ENCODE measurements at regions of chr6 and their contacts with region 1.

Region 1: GRCh38 chr6:37791156-37791919 is 28.2 kb upstream of the ZFAND3 start:
- DNase-seq: peak; percentile 66
- H3K4me3 Mint-ChIP-seq: no peak overlapping the region
- H3K27ac Mint-ChIP-seq: no peak overlapping the region
- H3K4me1 Mint-ChIP-seq: peaks cover 12% of the 10 kb centered on the region
- H3K27me3 Mint-ChIP-seq: peaks cover 1% of the 10 kb centered on the region

Region 2: DNA sequence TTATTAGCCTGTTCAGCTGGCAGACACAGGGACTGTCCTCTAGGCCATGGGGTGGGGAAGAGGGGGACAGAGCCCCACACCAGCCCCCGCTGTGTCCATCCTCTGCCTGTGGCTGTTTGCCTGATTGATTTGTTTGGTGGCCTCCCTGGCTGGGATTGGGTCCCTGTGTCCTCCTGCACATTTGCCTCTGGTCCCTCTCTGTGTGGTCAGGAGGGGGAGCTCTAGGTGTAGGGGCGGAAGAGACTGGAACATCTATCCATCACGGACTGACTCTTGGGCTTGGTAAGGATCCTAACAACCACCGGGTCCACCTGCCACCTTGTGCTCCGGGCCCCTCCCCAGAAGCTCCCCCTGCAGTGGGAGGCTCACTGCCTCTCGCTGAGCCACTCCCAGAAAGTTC is 253.2 kb before region 1 on chr6:
- intact Hi-C with region 1: no loop called
- DNase-seq: no peak
- H3K4me3 Mint-ChIP-seq: no peak overlapping the region
- H3K27ac Mint-ChIP-seq: no peak overlapping the region
- H3K4me1 Mint-ChIP-seq: no peaks in the 10 kb centered on the region
- H3K27me3 Mint-ChIP-seq: peaks cover 45% of the 10 kb centered on the region

Region 3: GRCh38 chr6:37624986-37625574 is 166.3 kb before region 1 on chr6:
- intact Hi-C with region 1: no loop called
- DNase-seq: no peak
- H3K4me3 Mint-ChIP-seq: no peak overlapping the region
- H3K27ac Mint-ChIP-seq: no peak overlapping the region
- H3K4me1 Mint-ChIP-seq: peaks cover 18% of the 10 kb centered on the region
- H3K27me3 Mint-ChIP-seq: peaks cover 21% of the 10 kb centered on the region

Region 4: GRCh38 chr6:37698261-37699137 is 92.8 kb before region 1 on chr6:
- intact Hi-C with region 1: loop called (anchors 1 kb)
- DNase-seq: peak; percentile 58
- H3K4me3 Mint-ChIP-seq: peak overlapping the region; percentile 91
- H3K27ac Mint-ChIP-seq: peak overlapping the region; percentile 91
- H3K4me1 Mint-ChIP-seq: peaks cover 28% of the 10 kb centered on the region
- H3K27me3 Mint-ChIP-seq: peaks cover 34% of the 10 kb centered on the region

Region 5: DNA sequence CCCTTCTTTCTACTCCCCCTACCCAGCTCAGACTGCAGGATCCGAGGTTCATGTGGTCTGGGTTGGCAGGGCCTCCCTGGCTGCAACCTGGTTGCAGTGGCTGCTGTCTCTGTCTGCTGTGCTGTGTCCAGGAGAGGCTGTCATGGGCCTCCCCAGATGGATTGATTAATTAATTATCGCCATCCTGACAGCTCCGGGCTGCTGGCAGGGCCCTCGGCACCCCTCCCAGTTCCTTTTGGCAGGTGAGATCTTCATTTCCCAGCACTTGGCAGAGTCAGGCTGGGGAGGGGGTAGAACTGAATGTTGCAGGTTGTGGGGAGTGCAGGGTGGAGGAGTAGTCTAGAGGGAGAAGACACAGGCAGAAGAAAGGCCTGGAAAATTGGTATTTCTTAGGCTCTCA is 28.5 kb before region 1 on chr6:
- intact Hi-C with region 1: no loop called
- DNase-seq: no peak
- H3K4me3 Mint-ChIP-seq: no peak overlapping the region
- H3K27ac Mint-ChIP-seq: no peak overlapping the region
- H3K4me1 Mint-ChIP-seq: peaks cover 10% of the 10 kb centered on the region
- H3K27me3 Mint-ChIP-seq: no peaks in the 10 kb centered on the region

Region 6: DNA sequence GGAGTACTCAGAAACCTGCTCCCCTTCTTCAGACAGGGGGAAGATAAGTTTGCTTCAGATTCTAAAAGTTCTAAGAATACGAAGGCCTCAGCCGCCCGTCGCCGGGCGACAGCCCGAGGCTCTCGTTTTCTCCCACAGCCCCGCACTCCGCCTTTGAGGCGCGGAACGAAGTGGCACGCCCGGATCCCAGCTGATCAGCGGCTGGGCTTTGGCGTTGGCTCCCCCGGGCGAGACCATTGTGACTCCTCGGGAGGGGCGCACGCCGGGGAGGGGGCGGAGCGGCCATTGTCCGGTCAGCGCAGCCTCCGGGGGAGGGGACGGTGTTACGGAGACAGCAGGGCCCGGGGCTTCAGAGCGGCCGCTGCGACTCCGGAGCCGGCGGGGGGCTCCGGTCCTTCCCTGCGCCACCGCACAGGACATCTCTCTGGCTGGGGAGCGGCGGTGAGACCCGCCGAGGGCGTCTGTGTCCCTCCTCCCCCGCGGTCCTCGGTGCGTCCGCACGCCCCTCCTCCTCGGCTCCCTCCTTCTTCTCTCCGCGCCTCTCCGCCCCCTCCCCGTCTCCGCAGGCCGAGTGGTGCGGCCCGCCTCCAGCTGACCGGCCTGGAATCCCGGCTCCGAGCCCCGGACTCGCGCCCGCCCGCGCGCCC is 28.0 kb after region 1 on chr6 and contains the start of gene ZFAND3:
- intact Hi-C with region 1: loop called (anchors 1 kb)
- DNase-seq: peak; percentile 93
- H3K4me3 Mint-ChIP-seq: peak within 1 kb of the TSS; percentile 95
- H3K27ac Mint-ChIP-seq: peak within 1 kb of the TSS; percentile 97
- H3K4me1 Mint-ChIP-seq: peaks cover 52% of the 10 kb centered on the region
- H3K27me3 Mint-ChIP-seq: peaks cover 9% of the 10 kb centered on the region
- total RNA-seq, gene ZFAND3: 36.9 and 44.1 TPM in 2 replicates

Region 7: DNA sequence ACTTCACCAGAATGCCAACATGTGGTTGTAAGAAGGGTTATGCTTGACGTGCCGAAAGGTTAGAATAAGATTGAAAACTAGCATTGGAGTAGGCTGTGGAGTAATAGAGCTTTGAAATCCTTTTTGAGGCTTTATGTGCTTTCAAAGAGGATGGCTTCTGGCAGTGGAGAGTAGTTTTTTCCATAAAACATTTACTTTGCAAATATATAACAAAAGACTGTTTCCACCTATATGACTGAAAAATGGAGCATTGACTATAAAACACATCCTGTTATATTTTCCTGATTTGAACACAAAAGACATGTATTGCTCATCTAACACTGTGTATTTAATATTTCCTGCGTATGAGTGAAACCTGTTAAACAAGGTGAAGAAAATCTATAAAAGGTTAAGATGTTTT is 67.0 kb after region 1 on chr6:
- intact Hi-C with region 1: loop called (anchors 1 kb)
- DNase-seq: no peak
- H3K4me3 Mint-ChIP-seq: no peak overlapping the region
- H3K27ac Mint-ChIP-seq: peak overlapping the region; percentile 92
- H3K4me1 Mint-ChIP-seq: peaks cover 49% of the 10 kb centered on the region
- H3K27me3 Mint-ChIP-seq: no peaks in the 10 kb centered on the region

Region 8: DNA sequence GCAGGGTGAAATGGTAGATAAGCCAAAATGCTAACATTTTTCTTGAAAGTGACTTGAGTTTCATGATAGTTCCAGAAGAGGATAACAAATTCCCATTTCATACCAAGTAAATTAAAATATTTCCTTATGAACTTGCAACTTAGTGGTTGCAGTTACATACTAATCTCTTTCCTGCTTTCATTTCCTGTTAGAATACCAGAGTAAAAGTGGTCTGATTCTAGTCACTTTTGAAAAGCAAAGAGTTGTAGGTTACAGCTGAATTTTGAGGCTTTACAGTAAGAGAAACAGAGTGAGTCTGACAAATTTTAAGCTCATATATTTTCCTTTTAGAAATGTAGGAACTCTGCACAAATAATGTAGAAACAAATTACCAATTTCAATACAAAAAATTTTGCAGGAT is 145.6 kb after region 1 on chr6:
- intact Hi-C with region 1: no loop called
- DNase-seq: no peak
- H3K4me3 Mint-ChIP-seq: no peak overlapping the region
- H3K27ac Mint-ChIP-seq: no peak overlapping the region
- H3K4me1 Mint-ChIP-seq: peaks cover 21% of the 10 kb centered on the region
- H3K27me3 Mint-ChIP-seq: no peaks in the 10 kb centered on the region

Region 9: GRCh38 chr6:38012573-38012972 is 221.2 kb after region 1 on chr6:
- intact Hi-C with region 1: loop called (anchors 1 kb)
- DNase-seq: no peak
- H3K4me3 Mint-ChIP-seq: no peak overlapping the region
- H3K27ac Mint-ChIP-seq: no peak overlapping the region
- H3K4me1 Mint-ChIP-seq: peaks cover 6% of the 10 kb centered on the region
- H3K27me3 Mint-ChIP-seq: no peaks in the 10 kb centered on the region

Region 10: GRCh38 chr6:38131527-38131965 is 340.2 kb after region 1 on chr6:
- intact Hi-C with region 1: loop called (anchors 10 kb)
- DNase-seq: no peak
- H3K4me3 Mint-ChIP-seq: peak overlapping the region; percentile 61
- H3K27ac Mint-ChIP-seq: peak overlapping the region; percentile 73
- H3K4me1 Mint-ChIP-seq: peaks cover 15% of the 10 kb centered on the region
- H3K27me3 Mint-ChIP-seq: no peaks in the 10 kb centered on the region

Region 11: GRCh38 chr6:38493931-38494547 is 702.7 kb after region 1 on chr6:
- intact Hi-C with region 1: loop called (anchors 2 kb)
- DNase-seq: peak; percentile 54
- H3K4me3 Mint-ChIP-seq: no peak overlapping the region
- H3K27ac Mint-ChIP-seq: no peak overlapping the region
- H3K4me1 Mint-ChIP-seq: peaks cover 4% of the 10 kb centered on the region
- H3K27me3 Mint-ChIP-seq: no peaks in the 10 kb centered on the region

Measured in activated T-helper 1 cell treated with anti-CD3 and anti-CD28 coated beads, Interleukin-12 subunit alpha, Interleukin-12 subunit beta, Interleukin-2, Interleukin-4 antibody, amounts not matched to agents 30 ng/mL and 10 ng/mL and 1 ng/mL, durations not matched to agents 14 hours and 24 hours and 36 hours (primary cell).